ENCODE measurements at regions of chr10 and their contacts with region 1.

Region 1: DNA sequence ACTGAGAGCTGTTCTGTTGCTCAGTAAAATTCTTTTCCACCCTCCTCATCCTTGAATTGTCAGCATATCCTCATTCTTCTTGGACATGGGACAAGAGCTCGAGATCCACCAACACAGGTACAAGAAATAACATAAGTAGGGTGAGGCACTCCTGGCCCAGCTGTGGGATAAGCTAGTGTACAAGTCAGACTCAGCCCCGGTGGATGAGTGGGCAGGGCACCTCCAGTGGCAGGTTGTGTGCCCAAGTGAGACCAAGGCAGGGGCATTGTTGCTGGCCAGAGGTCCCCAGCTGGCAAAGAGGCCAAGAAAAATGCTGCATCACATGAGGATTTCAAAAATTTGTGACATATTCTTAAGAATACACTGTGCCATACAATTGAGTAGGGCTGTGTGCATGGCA is 402.0 kb upstream of the ZWINT start:
- DNase-seq: no peak
- ATAC-seq: no peak
- H3K4me3 ChIP-seq: no peak overlapping the region
- H3K27ac ChIP-seq: no peak overlapping the region
- H3K4me1 ChIP-seq: no peaks in the 10 kb centered on the region
- H3K27me3 ChIP-seq: no peaks in the 10 kb centered on the region
- CTCF ChIP-seq: no peak
- POLR2A ChIP-seq: no peak
- RAD21 ChIP-seq: no peak

Region 2: GRCh38 chr10:56507033-56507432 is 256.1 kb before region 1 on chr10:
- CTCF ChIA-PET with region 1: no interaction called
- POLR2A ChIA-PET with region 1: no interaction called
- dilution Hi-C with region 1: no loop called
- in situ Hi-C with region 1: no loop called
- intact Hi-C with region 1: loop called (anchors 10 kb)
- DNase-seq: no peak
- ATAC-seq: no peak
- H3K4me3 ChIP-seq: no peak overlapping the region
- H3K27ac ChIP-seq: no peak overlapping the region
- H3K4me1 ChIP-seq: no peaks in the 10 kb centered on the region
- H3K27me3 ChIP-seq: no peaks in the 10 kb centered on the region
- CTCF ChIP-seq: no peak
- POLR2A ChIP-seq: no peak
- RAD21 ChIP-seq: no peak